ENCODE measurements at regions of chr5 and their contacts with region 1.

Region 1: DNA sequence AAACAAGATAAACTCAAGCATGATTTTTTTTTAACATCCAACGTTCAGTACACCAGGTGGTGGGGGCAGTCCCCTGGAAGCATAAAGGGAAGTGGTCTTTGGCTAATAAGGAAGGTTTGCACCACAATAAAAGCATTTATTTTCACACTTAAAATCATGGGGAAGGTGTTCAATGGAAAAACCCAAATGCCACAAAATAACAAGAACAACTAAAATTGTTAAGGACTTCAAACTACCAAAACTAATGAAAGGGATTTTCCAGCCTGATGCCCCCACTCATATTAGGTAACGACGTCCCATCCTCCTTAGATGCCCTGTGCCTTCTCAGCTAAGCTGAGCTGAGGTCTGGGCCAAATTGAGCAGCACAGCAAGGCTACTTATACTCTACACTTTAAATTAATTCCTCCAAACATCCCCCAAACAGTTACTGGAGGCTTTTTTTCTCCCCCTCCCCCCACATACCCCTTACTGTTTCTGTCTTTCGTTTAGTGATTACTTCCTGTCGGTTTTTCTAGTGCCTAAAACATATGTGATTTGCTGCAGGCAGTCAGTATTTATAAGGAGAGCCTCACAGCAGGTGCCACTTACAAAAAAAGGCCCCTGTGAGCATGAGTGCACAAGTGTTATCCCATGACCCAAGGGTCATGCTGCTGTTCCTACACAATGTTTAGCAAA is 259.7 kb upstream of the ZNF608 start:
- DNase-seq: peak; percentile 97
- H3K4me3 ChIP-seq: peak overlapping the region; percentile 55
- H3K27ac ChIP-seq: peak overlapping the region; percentile 100
- H3K4me1 ChIP-seq: peaks cover 91% of the 10 kb centered on the region
- CTCF ChIP-seq: no peak

Region 2: GRCh38 chr5:124524552-124525232 is 481.5 kb before region 1 on chr5:
- CTCF ChIA-PET with region 1: no interaction called
- POLR2A ChIA-PET with region 1: no interaction called
- intact Hi-C with region 1: loop called (anchors 10 kb)
- DNase-seq: peak; percentile 91
- H3K4me3 ChIP-seq: peak overlapping the region; percentile 3
- H3K27ac ChIP-seq: peak overlapping the region; percentile 56
- H3K4me1 ChIP-seq: peaks cover 25% of the 10 kb centered on the region
- CTCF ChIP-seq: peak; percentile 72

Region 3: DNA sequence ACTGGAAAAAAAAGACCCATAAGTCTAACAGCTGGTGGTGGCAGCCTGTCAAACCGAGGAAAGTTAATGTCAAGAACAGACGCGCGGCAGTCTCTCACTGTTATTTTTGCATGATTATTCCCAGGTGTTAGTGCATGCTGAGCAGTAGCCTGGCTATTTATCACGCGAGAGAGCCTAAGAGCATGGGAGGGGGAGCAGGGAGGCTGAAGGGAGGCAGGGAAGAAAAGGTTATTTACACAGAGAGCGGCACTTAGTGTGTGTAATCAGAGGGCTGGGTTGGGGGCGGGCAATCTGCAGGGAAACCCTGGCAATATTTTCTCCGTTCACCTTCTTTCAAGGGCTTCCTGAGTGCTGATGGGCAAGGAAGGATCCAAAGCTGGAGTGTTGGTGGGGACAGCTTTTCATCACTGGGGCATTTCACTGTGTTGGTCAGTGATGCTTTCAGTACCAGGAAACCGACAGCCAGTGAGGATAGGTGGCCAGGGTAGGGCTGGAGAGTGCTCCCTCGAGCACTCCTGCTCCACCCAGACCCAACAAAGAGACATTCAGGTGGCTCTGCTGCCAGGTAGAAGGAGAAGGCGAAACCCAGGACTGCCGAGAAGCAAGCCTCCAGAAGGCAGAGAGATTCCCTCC is 299.3 kb before region 1 on chr5:
- CTCF ChIA-PET with region 1: no interaction called
- POLR2A ChIA-PET with region 1: interaction called, 8 read pairs
- intact Hi-C with region 1: loop called (anchors 2 kb)
- DNase-seq: peak; percentile 53
- H3K4me3 ChIP-seq: peak overlapping the region; percentile 66
- H3K27ac ChIP-seq: peak overlapping the region; percentile 95
- H3K4me1 ChIP-seq: peaks cover 95% of the 10 kb centered on the region
- CTCF ChIP-seq: no peak

Region 4: DNA sequence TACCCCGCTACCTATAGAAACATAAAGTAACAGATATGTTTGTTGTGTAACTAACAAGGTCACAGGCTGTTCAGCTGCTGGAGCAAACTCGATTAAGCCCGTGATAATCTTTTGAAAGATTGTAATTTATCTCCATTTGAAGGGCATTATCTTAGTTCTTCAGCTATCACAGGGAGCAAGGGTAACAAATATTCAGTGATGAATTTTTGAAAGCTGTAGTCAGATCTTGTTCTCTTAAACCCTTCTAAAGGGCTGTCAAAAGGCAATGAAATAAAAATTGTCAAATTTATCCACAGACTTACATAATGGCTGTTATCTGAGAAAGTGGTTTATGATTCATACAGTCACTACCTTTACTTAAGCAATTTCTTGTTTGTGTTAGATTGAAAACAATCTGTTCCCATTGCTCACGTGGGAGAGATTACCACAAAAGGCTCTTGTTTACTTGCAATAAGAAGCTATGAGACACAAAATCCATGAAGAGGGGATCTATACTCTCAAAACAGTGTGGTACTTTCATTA is 181.4 kb before region 1 on chr5:
- CTCF ChIA-PET with region 1: no interaction called
- POLR2A ChIA-PET with region 1: interaction called, 4 read pairs
- intact Hi-C with region 1: loop called (anchors 2 kb)
- DNase-seq: no peak
- H3K4me3 ChIP-seq: peak overlapping the region; percentile 46
- H3K27ac ChIP-seq: peak overlapping the region; percentile 80
- H3K4me1 ChIP-seq: peaks cover 33% of the 10 kb centered on the region
- CTCF ChIP-seq: no peak

Region 5: DNA sequence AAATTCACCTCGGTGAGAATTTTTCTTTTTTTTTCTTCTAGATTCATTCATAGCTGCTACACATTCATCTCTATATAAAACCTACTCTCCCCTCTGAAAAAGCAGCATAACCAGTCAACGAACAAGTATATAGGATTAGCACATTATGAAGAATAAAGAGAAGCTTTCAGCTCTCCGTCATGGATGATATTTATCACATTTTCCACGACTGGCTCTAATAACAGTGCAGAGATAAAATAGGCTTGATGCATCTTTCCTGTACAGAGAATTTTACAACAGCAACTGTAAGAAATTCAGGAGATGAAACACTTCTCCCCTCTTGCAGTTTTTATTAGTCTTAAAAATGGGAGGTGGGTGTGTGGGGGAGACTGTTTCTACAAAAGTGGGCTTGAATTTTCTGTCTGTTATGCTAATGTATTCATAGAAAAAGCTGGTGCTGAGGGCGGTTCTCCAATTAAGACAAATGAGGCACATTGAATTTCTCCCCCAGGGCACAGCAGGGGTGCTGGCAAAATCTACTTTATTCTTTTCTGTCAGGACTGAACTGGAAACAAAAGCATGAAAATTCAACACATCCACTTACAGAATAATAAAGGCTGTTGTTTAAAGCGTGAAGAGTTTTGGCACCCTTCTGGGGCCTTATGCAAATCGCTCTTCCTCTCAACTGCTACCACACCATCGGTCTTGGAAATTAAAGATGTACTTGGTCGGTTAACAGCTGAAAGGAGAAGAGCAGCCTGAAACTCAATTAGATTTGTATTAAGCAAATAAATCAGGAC is 25.8 kb before region 1 on chr5:
- CTCF ChIA-PET with region 1: no interaction called
- POLR2A ChIA-PET with region 1: interaction called, 66 read pairs
- intact Hi-C with region 1: loop called (anchors 1 kb)
- DNase-seq: peak; percentile 91
- H3K4me3 ChIP-seq: peak overlapping the region; percentile 56
- H3K27ac ChIP-seq: peak overlapping the region; percentile 98
- H3K4me1 ChIP-seq: peaks cover 44% of the 10 kb centered on the region
- CTCF ChIP-seq: no peak